ENCODE measurements at regions of chr20 and their contacts with region 1.

Region 1: DNA sequence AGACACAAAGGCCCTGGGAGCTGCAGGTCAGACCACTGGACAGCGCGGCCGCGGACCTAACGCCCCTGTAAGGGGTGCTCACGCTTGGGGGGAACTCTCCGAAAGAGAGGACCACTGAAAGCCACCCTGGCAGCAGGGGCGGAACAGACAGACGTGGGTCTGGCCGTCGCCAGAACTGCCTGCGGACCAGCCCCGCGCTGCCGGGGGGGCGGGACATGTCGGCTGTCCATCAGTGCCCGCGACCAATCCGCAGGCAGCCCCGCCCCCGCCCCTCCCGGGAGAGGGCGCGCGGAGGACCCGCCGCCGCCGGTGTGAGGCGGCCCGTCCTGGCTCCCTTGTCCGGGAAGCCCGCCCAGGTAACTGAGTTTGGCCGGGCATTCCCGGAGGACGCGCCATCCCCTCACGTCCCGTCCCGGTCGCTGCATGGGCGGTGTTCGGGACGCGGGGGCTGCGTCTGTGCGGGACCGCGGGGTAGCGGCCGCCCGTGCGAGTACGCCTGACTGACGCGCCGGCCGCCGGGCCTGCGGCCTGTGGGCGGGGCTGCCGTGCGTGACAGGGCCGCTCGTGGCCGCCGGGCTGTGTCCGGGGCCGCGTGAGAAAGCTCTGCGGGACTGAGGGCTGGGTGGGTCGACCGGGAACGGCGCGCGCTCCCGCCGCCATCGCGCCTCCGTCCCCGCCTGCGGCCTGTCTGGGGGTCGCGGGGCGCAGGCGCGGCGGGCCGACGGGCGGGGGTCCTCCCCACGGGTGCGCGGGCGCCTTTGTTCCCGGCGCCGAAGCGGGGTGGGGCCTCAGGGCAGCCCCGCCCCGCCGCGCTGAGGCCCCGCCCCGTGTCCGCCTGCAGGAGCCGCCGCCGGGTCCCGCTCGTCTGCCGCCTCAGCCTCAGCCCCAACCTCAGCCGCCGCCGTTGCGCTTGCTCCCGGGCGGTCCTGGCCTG is at the start of gene PLCG1:
- DNase-seq: peak; percentile 92
- ATAC-seq: peak; percentile 51
- H3K4me3 Mint-ChIP-seq: peak within 1 kb of the TSS; percentile 85
- H3K27ac Mint-ChIP-seq: peak within 1 kb of the TSS; percentile 91
- H3K4me1 Mint-ChIP-seq: peaks cover 42% of the 10 kb centered on the region
- H3K27me3 Mint-ChIP-seq: no peaks in the 10 kb centered on the region
- total RNA-seq, gene PLCG1: 419 to 425 TPM

Region 2: GRCh38 chr20:40925829-40926510 is 211.0 kb before region 1 on chr20:
- POLR2A ChIA-PET with region 1: no interaction called
- DNase-seq: no peak
- ATAC-seq: no peak
- H3K4me3 Mint-ChIP-seq: no peak overlapping the region
- H3K27ac Mint-ChIP-seq: no peak overlapping the region
- H3K4me1 Mint-ChIP-seq: peaks cover 3% of the 10 kb centered on the region
- H3K27me3 Mint-ChIP-seq: peaks cover 11% of the 10 kb centered on the region

Region 3: DNA sequence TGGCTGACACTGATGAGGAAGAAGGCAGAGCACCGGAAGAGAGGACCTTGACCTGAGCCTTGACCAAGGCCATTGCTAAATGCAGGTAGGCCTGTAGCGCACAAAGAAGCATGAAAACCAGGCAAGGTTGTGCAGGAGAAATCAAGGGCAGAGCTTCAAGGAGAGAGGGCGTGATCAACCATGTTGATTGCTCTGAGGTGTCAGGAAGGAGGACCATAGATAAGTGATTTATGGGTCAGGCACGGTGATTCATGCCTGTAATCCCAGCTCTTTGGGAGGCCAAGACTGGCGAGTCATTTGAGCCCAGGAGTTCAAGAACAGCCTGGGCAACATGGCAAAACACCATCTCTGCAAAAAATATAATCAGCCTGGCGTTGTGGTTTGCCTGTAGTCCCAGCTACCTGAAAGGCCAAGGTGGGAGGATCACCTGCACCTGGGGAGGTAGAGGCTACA is 12.8 kb after region 1 on chr20:
- POLR2A ChIA-PET with region 1: interaction called, 505 read pairs
- DNase-seq: no peak
- ATAC-seq: no peak
- H3K4me3 Mint-ChIP-seq: peak overlapping the region; percentile 14
- H3K27ac Mint-ChIP-seq: peak overlapping the region; percentile 70
- H3K4me1 Mint-ChIP-seq: peaks cover 89% of the 10 kb centered on the region
- H3K27me3 Mint-ChIP-seq: no peaks in the 10 kb centered on the region

Region 4: GRCh38 chr20:41213150-41213820 is 76.3 kb after region 1 on chr20:
- POLR2A ChIA-PET with region 1: no interaction called
- DNase-seq: no peak
- ATAC-seq: no peak
- H3K4me3 Mint-ChIP-seq: no peak overlapping the region
- H3K27ac Mint-ChIP-seq: no peak overlapping the region
- H3K4me1 Mint-ChIP-seq: peaks cover 2% of the 10 kb centered on the region
- H3K27me3 Mint-ChIP-seq: peaks cover 2% of the 10 kb centered on the region

Region 5: GRCh38 chr20:41232973-41233926 is 96.3 kb after region 1 on chr20:
- POLR2A ChIA-PET with region 1: interaction called, 10 read pairs
- DNase-seq: no peak
- ATAC-seq: no peak
- H3K4me3 Mint-ChIP-seq: peak overlapping the region; percentile 1
- H3K27ac Mint-ChIP-seq: no peak overlapping the region
- H3K4me1 Mint-ChIP-seq: peaks cover 28% of the 10 kb centered on the region
- H3K27me3 Mint-ChIP-seq: no peaks in the 10 kb centered on the region